ENCODE measurements at regions of chr9 and their contacts with region 1.

Region 1: GRCh38 chr9:76980576-76980975 is 38.9 kb upstream of the FOXB2 start:
- DNase-seq: no peak
- H3K4me3 ChIP-seq: no peak overlapping the region
- H3K27ac ChIP-seq: no peak overlapping the region
- H3K4me1 ChIP-seq: no peaks in the 10 kb centered on the region
- H3K27me3 ChIP-seq: peaks cover 0 to 14% of the 10 kb centered on the region in 2 donors
- CTCF ChIP-seq: no peak
- POLR2A ChIP-seq: no peak

Region 2: DNA sequence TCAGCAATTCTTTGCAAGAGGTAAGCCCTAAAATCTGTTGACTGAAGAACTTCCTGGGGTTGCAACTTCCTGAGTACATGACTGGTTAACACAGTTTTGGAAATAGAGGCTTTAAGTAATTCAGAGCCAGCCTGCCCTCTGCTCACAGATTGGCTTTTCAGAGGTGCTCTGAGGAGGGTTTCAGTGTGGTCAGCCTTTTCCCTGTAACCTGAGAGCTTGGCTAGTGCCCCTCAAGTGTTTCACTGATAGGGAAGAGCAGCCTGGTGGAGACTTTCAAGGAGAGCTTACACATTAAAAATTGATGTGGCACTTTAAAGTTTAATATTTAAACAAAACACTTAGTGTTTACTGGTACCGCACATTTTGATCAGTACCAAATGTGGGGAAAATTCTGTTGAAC is 17.8 kb before region 1 on chr9:
- intact Hi-C with region 1: no loop called
- DNase-seq: no peak
- H3K4me3 ChIP-seq: no peak overlapping the region
- H3K27ac ChIP-seq: no peak overlapping the region
- H3K4me1 ChIP-seq: no peaks in the 10 kb centered on the region
- H3K27me3 ChIP-seq: no peaks in the 10 kb centered on the region
- CTCF ChIP-seq: no peak
- POLR2A ChIP-seq: no peak

Region 3: GRCh38 chr9:77011973-77012821 is 31.6 kb after region 1 on chr9:
- intact Hi-C with region 1: loop called (anchors 2 kb)
- DNase-seq: peak in 1 of 2 donors; percentile 62
- H3K4me3 ChIP-seq: peak overlapping the region in 1 of 3 donors; percentile 6
- H3K27ac ChIP-seq: no peak overlapping the region
- H3K4me1 ChIP-seq: no peaks in the 10 kb centered on the region
- H3K27me3 ChIP-seq: peaks cover 3 to 72% of the 10 kb centered on the region in 2 donors
- CTCF ChIP-seq: peak; percentile 10 to 45 (median 30)
- POLR2A ChIP-seq: no peak

Measured in breast epithelium (tissue), 4 donors.